IMR-90 (cell line): ENCODE measurements at regions of chr5 and their contacts with region 1.

Region 1: DNA sequence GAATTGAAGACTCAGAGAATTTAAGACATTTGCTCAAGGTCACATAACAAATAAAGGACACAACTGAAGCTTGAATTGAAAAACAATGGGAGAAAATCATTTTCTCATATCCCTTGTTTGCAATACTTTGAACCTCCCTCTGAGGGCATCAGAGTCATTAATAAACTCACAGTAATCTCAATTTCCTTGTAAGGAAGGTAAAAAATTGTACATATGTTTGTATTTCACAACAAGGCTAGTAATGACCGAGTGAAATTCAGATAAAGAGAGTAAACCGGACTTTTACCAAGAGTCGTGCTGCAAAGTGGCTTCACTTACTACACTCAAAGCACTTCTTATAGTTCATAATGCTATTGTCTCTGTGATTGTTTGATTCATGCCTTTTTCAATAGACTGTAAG is 665.0 kb downstream of the NR2F1-AS1 start:
- DNase-seq: peak; percentile 44
- ATAC-seq: peak; percentile 49
- H3K4me3 ChIP-seq: no peak overlapping the region
- H3K27ac ChIP-seq: no peak overlapping the region
- H3K4me1 ChIP-seq: peaks cover 2% of the 10 kb centered on the region; the same call in 1 of the 2 replicates
- H3K27me3 ChIP-seq: no peaks in the 10 kb centered on the region
- CTCF ChIP-seq: peak; percentile 44
- POLR2A ChIP-seq: no peak
- RAD21 ChIP-seq: peak; percentile 43

Region 2: GRCh38 chr5:92207151-92207550 is 708.9 kb before region 1 on chr5:
- CTCF ChIA-PET with region 1: no interaction called
- POLR2A ChIA-PET with region 1: no interaction called
- dilution Hi-C with region 1: no loop called
- in situ Hi-C with region 1: no loop called
- intact Hi-C with region 1: no loop called
- DNase-seq: no peak
- ATAC-seq: no peak
- H3K4me3 ChIP-seq: no peak overlapping the region
- H3K27ac ChIP-seq: no peak overlapping the region
- H3K4me1 ChIP-seq: no peaks in the 10 kb centered on the region
- H3K27me3 ChIP-seq: no peaks in the 10 kb centered on the region
- CTCF ChIP-seq: no peak
- POLR2A ChIP-seq: no peak
- RAD21 ChIP-seq: no peak

Region 3: GRCh38 chr5:93497096-93497495 is 581.1 kb after region 1 on chr5:
- CTCF ChIA-PET with region 1: no interaction called
- POLR2A ChIA-PET with region 1: no interaction called
- dilution Hi-C with region 1: no loop called
- in situ Hi-C with region 1: no loop called
- intact Hi-C with region 1: loop called (anchors 5 kb)
- DNase-seq: peak; percentile 83
- ATAC-seq: peak; percentile 56
- H3K4me3 ChIP-seq: no peak overlapping the region
- H3K27ac ChIP-seq: no peak overlapping the region
- H3K4me1 ChIP-seq: peaks cover 3% of the 10 kb centered on the region; the same call in 1 of the 2 replicates
- H3K27me3 ChIP-seq: no peaks in the 10 kb centered on the region
- CTCF ChIP-seq: no peak
- POLR2A ChIP-seq: no peak
- RAD21 ChIP-seq: no peak